Activated CD8-positive, alpha-beta T cell treated with anti-CD3 and anti-CD28 coated beads, Interleukin-2, amount 10 ng/mL, durations not matched to agents 7 days and 5 days (primary cell): ENCODE measurements at regions of chr19 and their contacts with region 1.

Region 1: DNA sequence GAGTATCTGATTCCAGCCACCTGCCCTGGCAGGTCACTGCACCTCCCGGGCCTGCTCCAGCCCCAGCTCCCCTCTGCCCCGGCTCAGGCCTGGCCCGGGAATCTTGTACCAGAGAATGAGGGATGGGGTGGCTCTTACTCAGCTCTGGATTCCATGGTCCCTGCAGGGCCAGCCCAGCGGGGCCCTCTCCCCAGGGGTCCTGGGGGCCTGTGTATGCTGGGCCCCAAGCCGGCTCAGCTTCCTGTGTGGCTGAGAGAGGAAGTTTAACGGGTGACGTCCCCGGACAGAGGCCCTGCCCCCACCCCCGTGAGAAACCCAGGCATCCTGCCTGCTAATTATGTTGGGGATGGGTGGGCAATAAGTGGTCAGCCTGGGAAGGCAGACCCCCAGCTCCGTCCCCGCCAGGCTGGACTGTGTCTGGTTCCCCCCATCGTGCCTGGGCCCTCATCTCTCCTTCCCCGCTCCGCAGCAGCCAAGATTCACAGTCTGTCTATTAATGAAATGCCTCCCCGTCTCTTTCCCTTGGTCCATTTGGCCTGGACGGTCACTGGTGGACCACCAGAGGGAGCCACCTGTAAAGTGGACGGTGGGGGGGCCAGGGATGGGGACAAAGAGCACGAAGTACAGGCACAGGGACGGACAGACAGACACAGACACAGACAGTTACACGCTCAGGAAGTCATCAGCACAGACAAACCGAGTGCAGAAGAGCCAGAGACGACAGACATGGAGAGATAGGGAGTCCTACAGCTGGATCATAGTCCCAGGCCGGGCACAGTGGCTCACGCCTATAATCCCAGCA is at the start of gene DENND1C:
- DNase-seq: peak; percentile 85
- ATAC-seq: peak; percentile 91
- H3K4me3 Mint-ChIP-seq: peak within 1 kb of the TSS; percentile 95
- H3K27ac Mint-ChIP-seq: peak within 1 kb of the TSS; percentile 97
- H3K4me1 Mint-ChIP-seq: peaks cover 37% of the 10 kb centered on the region
- H3K27me3 Mint-ChIP-seq: no peaks in the 10 kb centered on the region
- total RNA-seq, gene DENND1C: 94.1 to 97.5 TPM

Region 2: GRCh38 chr19:6372594-6373095 is 109.1 kb before region 1 on chr19 and contains the start of gene ALKBH7:
- CTCF ChIA-PET with region 1: no interaction called
- POLR2A ChIA-PET with region 1: interaction called, 10 read pairs
- DNase-seq: peak; percentile 99
- ATAC-seq: peak; percentile 88
- H3K4me3 Mint-ChIP-seq: peak within 1 kb of the TSS; percentile 87
- H3K27ac Mint-ChIP-seq: peak within 1 kb of the TSS; percentile 94
- H3K4me1 Mint-ChIP-seq: peaks cover 31% of the 10 kb centered on the region
- H3K27me3 Mint-ChIP-seq: no peaks in the 10 kb centered on the region
- total RNA-seq, gene ALKBH7: 46.1 to 48.8 TPM

Region 3: GRCh38 chr19:6402837-6403608 is 78.7 kb before region 1 on chr19:
- CTCF ChIA-PET with region 1: no interaction called
- POLR2A ChIA-PET with region 1: no interaction called
- DNase-seq: no peak
- ATAC-seq: no peak
- H3K4me3 Mint-ChIP-seq: no peak overlapping the region
- H3K27ac Mint-ChIP-seq: no peak overlapping the region
- H3K4me1 Mint-ChIP-seq: peaks cover 3% of the 10 kb centered on the region
- H3K27me3 Mint-ChIP-seq: no peaks in the 10 kb centered on the region

Region 4: GRCh38 chr19:6424939-6425731 is 56.6 kb before region 1 on chr19:
- CTCF ChIA-PET with region 1: interaction called, 7 read pairs
- POLR2A ChIA-PET with region 1: interaction called, 11 read pairs
- DNase-seq: peak; percentile 100
- ATAC-seq: peak; percentile 90
- H3K4me3 Mint-ChIP-seq: peak overlapping the region; percentile 68
- H3K27ac Mint-ChIP-seq: peak overlapping the region; percentile 97
- H3K4me1 Mint-ChIP-seq: peaks cover 37% of the 10 kb centered on the region
- H3K27me3 Mint-ChIP-seq: no peaks in the 10 kb centered on the region

Region 5: DNA sequence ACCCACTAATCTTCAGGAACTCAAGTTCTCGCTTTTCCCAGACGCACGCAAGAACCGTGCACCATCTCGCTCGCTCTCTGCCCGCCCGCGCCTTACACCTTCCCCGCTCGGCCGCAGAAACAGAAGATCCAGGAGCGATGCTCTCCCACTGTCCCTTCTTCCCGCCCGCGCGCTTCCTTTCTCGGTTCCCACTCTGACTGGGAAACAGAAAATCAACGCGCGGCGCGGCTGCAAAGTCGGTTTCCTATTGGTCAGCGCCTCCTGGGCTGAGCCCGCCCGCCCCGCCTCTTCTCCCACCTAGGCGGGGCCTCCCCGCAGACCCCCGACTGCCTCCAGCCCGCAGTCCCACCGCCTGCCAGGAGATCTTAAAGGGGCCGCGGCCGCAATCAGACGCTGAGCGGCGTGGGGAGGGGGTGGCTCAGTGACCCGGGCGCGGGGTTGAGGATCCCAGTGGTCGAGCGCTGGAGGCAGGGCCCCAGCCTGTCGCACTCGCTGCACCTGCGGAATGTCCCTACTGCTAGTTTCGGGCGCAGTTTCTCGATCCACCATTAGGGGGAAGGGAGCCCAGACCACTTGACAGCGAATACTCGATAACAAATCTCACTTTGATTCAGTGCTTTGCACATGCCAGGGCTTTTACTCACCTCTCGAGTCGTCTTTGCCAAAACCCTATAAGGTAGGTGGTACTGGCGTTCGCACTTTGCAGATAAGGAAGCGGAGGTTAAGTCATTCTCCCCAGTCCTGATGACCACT is 21.5 kb before region 1 on chr19:
- CTCF ChIA-PET with region 1: interaction called, 4 read pairs
- POLR2A ChIA-PET with region 1: interaction called, 17 read pairs
- DNase-seq: peak; percentile 98
- ATAC-seq: peak; percentile 92
- H3K4me3 Mint-ChIP-seq: peak overlapping the region; percentile 94
- H3K27ac Mint-ChIP-seq: peak overlapping the region; percentile 92
- H3K4me1 Mint-ChIP-seq: peaks cover 30% of the 10 kb centered on the region
- H3K27me3 Mint-ChIP-seq: no peaks in the 10 kb centered on the region

Region 6: DNA sequence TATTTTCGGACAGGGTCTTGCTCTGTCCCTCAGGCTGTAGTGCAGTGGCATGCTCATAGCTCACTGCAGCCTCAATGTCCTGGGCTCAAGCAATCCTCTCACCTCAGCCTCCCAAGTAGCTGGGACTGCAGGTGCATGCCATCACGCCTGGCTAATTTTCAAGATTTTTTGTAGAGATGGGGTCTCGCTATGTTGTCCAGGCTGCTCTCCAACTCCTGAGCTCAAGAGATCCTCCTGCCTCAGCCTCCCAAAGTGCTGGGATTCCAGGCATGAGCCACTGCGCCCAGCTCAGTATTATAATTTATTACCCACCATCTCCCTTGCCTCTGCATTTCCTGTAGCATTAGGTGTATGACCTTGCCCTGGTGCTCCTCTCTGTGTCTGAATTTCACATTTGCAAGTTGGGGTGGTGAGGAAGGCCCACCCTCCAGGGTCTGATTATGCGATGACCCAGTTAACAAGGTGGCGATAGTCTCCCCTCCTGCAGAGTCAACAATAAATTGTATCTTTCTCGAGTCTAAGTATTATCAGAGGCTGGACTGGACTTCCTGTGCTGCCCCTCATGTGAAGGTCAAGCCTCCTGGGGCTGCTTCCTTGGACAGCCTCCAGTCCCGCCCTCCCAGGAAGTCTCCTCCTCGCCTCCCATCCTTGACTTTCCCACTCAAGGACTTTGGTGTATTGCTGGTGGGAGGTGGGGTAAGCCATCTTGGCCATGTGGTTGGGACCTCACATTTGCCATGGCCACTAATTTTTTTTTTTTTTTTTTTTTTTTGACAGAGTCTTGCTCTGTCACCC is 21.9 kb after region 1 on chr19:
- CTCF ChIA-PET with region 1: interaction called, 19 read pairs
- POLR2A ChIA-PET with region 1: interaction called, 8 read pairs
- DNase-seq: no peak
- ATAC-seq: no peak
- H3K4me3 Mint-ChIP-seq: no peak overlapping the region
- H3K27ac Mint-ChIP-seq: no peak overlapping the region
- H3K4me1 Mint-ChIP-seq: peaks cover 29% of the 10 kb centered on the region
- H3K27me3 Mint-ChIP-seq: peaks cover 6% of the 10 kb centered on the region

Region 7: GRCh38 chr19:6516659-6517291 is 35.0 kb after region 1 on chr19:
- CTCF ChIA-PET with region 1: interaction called, 10 read pairs
- POLR2A ChIA-PET with region 1: interaction called, 6 read pairs
- DNase-seq: peak; percentile 94
- ATAC-seq: peak; percentile 87
- H3K4me3 Mint-ChIP-seq: peak overlapping the region; percentile 93
- H3K27ac Mint-ChIP-seq: peak overlapping the region; percentile 93
- H3K4me1 Mint-ChIP-seq: peaks cover 32% of the 10 kb centered on the region
- H3K27me3 Mint-ChIP-seq: no peaks in the 10 kb centered on the region

Region 8: DNA sequence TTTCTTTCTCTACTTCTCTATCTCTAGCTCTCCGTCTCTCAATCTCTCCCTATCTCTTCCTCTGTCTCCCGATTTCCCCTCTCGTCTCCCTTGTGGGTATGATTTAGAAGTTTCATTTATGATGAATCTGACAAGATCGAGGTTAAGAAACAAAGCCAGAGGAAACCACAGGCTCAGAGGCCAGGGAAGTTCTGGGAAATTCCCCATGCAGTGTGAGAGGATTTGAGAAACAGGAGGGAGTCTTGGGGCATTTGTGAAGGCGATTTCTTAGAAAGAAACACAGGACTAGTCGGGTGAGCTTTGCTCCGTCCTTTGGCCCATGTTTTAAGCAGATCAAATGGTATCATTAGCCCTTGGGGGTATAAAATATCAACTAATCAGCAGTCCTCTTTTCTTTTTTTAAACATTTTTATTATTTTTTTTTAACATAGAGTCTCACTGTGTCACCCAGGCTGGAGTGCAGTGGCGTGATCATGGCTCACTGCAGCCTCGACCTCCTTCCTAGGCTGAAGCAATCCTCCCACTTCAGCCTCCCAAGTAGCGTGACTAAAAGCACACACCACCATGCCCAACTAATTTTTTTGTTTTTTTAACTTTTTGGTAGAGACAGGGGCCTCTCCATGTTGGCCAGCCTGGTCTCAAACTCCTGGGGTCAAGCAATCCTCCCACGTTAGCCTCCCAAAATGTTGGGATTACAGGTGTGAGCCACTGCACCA is 74.9 kb after region 1 on chr19:
- CTCF ChIA-PET with region 1: no interaction called
- POLR2A ChIA-PET with region 1: no interaction called
- DNase-seq: no peak
- ATAC-seq: no peak
- H3K4me3 Mint-ChIP-seq: no peak overlapping the region
- H3K27ac Mint-ChIP-seq: no peak overlapping the region
- H3K4me1 Mint-ChIP-seq: peaks cover 18% of the 10 kb centered on the region
- H3K27me3 Mint-ChIP-seq: no peaks in the 10 kb centered on the region